T-cell (primary cell): ENCODE measurements at regions of chr11 and their contacts with region 1.

Region 1: DNA sequence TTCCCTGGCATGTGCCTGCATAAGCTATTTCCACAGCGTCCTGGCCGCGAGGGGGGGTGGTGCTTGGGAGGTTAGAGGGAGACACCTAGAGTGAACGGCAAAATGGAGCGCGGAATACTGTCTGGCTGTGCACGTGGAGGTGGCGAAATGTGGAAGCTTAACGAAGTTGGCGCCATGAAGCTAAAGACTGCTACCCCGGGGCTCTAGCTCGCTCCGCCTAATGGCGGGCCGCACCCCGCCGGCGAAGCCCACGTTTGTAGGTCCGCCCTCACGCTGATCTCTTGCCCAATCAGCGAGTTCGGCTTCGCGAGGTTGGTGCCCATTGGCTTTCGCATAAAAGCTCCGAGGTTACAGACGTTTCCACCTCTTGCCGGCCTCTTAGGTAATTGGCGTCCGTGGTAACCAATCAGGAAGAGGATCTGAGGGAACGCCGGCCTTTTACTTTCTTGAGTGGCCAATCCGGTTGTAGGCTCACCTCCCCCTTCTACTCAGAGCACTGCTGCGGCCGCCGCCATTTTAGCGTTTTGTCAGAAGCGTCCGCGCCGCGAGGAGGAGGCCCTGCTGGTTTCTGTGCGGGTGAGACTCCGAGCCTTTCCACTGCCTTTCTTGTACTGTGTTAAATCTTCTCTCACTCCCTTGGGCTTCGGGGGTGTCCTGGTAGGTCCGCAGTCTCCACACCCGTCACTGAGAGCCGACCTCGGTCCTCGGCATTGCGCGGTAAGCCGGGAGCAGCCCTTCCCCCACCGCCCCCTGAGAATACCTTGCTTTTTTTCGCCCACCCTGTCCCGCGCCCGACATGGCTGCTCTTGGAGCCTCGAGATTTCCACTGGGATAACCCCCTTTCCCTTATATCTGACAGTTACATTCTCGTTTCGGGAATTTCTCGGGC is at the start of gene RBM4:
- DNase-seq: peak; percentile 80 to 99 (median 97)
- ATAC-seq: peak; percentile 88 to 95 (median 92)
- H3K4me3 ChIP-seq: peak within 1 kb of the TSS; percentile 78 to 100
- H3K4me3 Mint-ChIP-seq: peak within 1 kb of the TSS; percentile 98 to 99 (median 99)
- H3K27ac ChIP-seq: peak within 1 kb of the TSS; percentile 79
- H3K27ac Mint-ChIP-seq: peak within 1 kb of the TSS; percentile 97
- H3K4me1 ChIP-seq: peaks cover 45 to 51% of the 10 kb centered on the region in 2 experiments
- H3K4me1 Mint-ChIP-seq: peaks cover 65 to 72% (median 67%) of the 10 kb centered on the region in 3 donors
- H3K27me3 ChIP-seq: no peaks in the 10 kb centered on the region
- H3K27me3 Mint-ChIP-seq: no peaks in the 10 kb centered on the region
- total RNA-seq, gene RBM4: 163 to 233 (median 181) TPM

Region 2: GRCh38 chr11:66106786-66107599 is 531.4 kb before region 1 on chr11:
- CTCF ChIA-PET with region 1: no interaction called
- POLR2A ChIA-PET with region 1: interaction called in 1 of 2 experiments, 10 read pairs
- DNase-seq: no peak
- ATAC-seq: no peak
- H3K4me3 ChIP-seq: no peak overlapping the region
- H3K4me3 Mint-ChIP-seq: peak overlapping the region in 1 of 3 donors; percentile 57
- H3K27ac ChIP-seq: no peak overlapping the region
- H3K27ac Mint-ChIP-seq: peak overlapping the region; percentile 53 to 90
- H3K4me1 ChIP-seq: peaks cover 41 to 73% of the 10 kb centered on the region in 2 experiments
- H3K4me1 Mint-ChIP-seq: peaks cover 82 to 88% (median 82%) of the 10 kb centered on the region in 3 donors
- H3K27me3 ChIP-seq: no peaks in the 10 kb centered on the region
- H3K27me3 Mint-ChIP-seq: no peaks in the 10 kb centered on the region

Region 3: GRCh38 chr11:66454249-66454648 is 184.2 kb before region 1 on chr11:
- CTCF ChIA-PET with region 1: no interaction called
- POLR2A ChIA-PET with region 1: no interaction called
- DNase-seq: no peak
- ATAC-seq: no peak
- H3K4me3 ChIP-seq: no peak overlapping the region
- H3K4me3 Mint-ChIP-seq: no peak overlapping the region
- H3K27ac ChIP-seq: no peak overlapping the region
- H3K27ac Mint-ChIP-seq: no peak overlapping the region
- H3K4me1 ChIP-seq: peaks cover 3 to 7% of the 10 kb centered on the region in 2 experiments
- H3K4me1 Mint-ChIP-seq: peaks cover 13 to 17% (median 15%) of the 10 kb centered on the region in 3 donors
- H3K27me3 ChIP-seq: peaks cover 0 to 16% of the 10 kb centered on the region in 2 experiments
- H3K27me3 Mint-ChIP-seq: peaks cover 7 to 8% of the 10 kb centered on the region in 2 donors

Region 4: GRCh38 chr11:66466225-66467027 is 172.0 kb before region 1 on chr11 and contains the start of gene PELI3:
- CTCF ChIA-PET with region 1: interaction called in 1 of 2 experiments, 4 read pairs
- POLR2A ChIA-PET with region 1: interaction called, 5 to 16 read pairs
- DNase-seq: peak; percentile 83 to 97 (median 92)
- ATAC-seq: peak; percentile 88 to 93 (median 90)
- H3K4me3 ChIP-seq: peak within 1 kb of the TSS; percentile 49 to 70
- H3K4me3 Mint-ChIP-seq: peak within 1 kb of the TSS; percentile 83 to 89 (median 88)
- H3K27ac ChIP-seq: peak within 1 kb of the TSS; percentile 94
- H3K27ac Mint-ChIP-seq: peak within 1 kb of the TSS; percentile 85 to 91
- H3K4me1 ChIP-seq: peaks cover 7 to 24% of the 10 kb centered on the region in 2 experiments
- H3K4me1 Mint-ChIP-seq: peaks cover 20 to 30% (median 25%) of the 10 kb centered on the region in 3 donors
- H3K27me3 ChIP-seq: no peaks in the 10 kb centered on the region
- H3K27me3 Mint-ChIP-seq: no peaks in the 10 kb centered on the region
- total RNA-seq, gene PELI3: 12.9 to 22.0 (median 13.8) TPM

Region 5: GRCh38 chr11:66616379-66617154 is 21.9 kb before region 1 on chr11 and contains the start of gene RBM14:
- CTCF ChIA-PET with region 1: interaction called in 1 of 2 experiments, 26 read pairs
- POLR2A ChIA-PET with region 1: interaction called, 21 to 165 read pairs
- DNase-seq: peak; percentile 95 to 99 (median 98)
- ATAC-seq: peak; percentile 85 to 94 (median 93)
- H3K4me3 ChIP-seq: peak within 1 kb of the TSS; percentile 93 to 97
- H3K4me3 Mint-ChIP-seq: peak within 1 kb of the TSS; percentile 97 to 99 (median 98)
- H3K27ac ChIP-seq: peak within 1 kb of the TSS; percentile 97
- H3K27ac Mint-ChIP-seq: peak within 1 kb of the TSS; percentile 98
- H3K4me1 ChIP-seq: peaks cover 29 to 49% of the 10 kb centered on the region in 2 experiments
- H3K4me1 Mint-ChIP-seq: peaks cover 44 to 50% (median 49%) of the 10 kb centered on the region in 3 donors
- H3K27me3 ChIP-seq: no peaks in the 10 kb centered on the region
- H3K27me3 Mint-ChIP-seq: no peaks in the 10 kb centered on the region
- total RNA-seq, gene RBM14: 176 to 382 (median 191) TPM

Region 6: DNA sequence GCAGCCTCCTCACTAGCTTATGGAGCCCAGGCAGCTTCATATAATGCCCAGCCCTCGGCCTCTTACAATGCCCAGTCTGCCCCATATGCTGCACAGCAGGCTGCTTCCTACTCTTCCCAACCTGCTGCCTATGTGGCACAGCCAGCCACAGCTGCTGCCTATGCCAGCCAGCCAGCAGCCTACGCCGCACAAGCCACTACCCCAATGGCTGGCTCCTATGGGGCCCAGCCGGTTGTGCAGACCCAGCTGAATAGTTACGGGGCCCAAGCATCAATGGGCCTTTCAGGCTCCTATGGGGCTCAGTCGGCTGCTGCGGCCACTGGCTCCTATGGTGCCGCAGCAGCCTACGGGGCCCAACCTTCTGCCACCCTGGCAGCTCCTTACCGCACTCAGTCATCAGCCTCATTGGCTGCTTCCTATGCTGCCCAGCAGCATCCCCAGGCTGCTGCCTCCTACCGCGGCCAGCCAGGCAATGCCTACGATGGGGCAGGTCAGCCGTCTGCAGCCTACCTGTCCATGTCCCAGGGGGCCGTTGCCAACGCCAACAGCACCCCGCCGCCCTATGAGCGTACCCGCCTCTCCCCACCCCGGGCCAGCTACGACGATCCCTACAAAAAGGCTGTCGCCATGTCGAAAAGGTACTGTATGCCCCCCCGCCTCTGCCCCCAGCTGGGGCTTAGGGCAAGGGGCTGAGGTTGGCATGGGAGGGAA is 13.2 kb before region 1 on chr11:
- CTCF ChIA-PET with region 1: interaction called in 1 of 2 experiments, 6 read pairs
- POLR2A ChIA-PET with region 1: interaction called, 20 to 165 read pairs
- DNase-seq: no peak
- ATAC-seq: peak in 1 of 4 experiments; percentile 4
- H3K4me3 ChIP-seq: no peak overlapping the region
- H3K4me3 Mint-ChIP-seq: no peak overlapping the region
- H3K27ac ChIP-seq: no peak overlapping the region
- H3K27ac Mint-ChIP-seq: no peak overlapping the region
- H3K4me1 ChIP-seq: peaks cover 24 to 69% of the 10 kb centered on the region in 2 experiments
- H3K4me1 Mint-ChIP-seq: peaks cover 76 to 98% (median 85%) of the 10 kb centered on the region in 3 donors
- H3K27me3 ChIP-seq: no peaks in the 10 kb centered on the region
- H3K27me3 Mint-ChIP-seq: no peaks in the 10 kb centered on the region

Region 7: DNA sequence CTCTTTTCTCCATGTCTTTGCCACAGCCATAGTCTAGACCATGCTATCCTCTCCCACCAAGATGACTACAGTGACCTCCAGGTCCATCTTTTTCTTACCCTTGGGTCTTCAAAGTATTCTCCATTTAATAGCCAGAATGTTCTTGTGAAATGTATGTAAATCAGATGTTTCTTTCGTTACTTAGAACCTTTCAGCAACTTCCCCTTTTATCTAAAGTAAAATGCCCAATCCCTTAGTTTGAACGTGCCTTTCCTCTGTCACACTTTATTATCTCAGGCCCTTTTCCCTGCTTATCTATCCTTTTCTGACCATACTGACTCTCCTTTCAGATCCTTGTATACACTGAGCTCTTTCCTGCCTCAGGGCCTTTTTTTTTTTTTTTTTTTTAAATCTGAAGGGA is 21.3 kb after region 1 on chr11:
- CTCF ChIA-PET with region 1: interaction called in 1 of 2 experiments, 7 read pairs
- POLR2A ChIA-PET with region 1: interaction called, 14 read pairs
- DNase-seq: no peak
- ATAC-seq: no peak
- H3K4me3 ChIP-seq: no peak overlapping the region
- H3K4me3 Mint-ChIP-seq: no peak overlapping the region
- H3K27ac ChIP-seq: no peak overlapping the region
- H3K27ac Mint-ChIP-seq: no peak overlapping the region
- H3K4me1 ChIP-seq: no peaks in the 10 kb centered on the region
- H3K4me1 Mint-ChIP-seq: peaks cover 18 to 30% (median 21%) of the 10 kb centered on the region in 3 donors
- H3K27me3 ChIP-seq: no peaks in the 10 kb centered on the region
- H3K27me3 Mint-ChIP-seq: no peaks in the 10 kb centered on the region

Region 8: DNA sequence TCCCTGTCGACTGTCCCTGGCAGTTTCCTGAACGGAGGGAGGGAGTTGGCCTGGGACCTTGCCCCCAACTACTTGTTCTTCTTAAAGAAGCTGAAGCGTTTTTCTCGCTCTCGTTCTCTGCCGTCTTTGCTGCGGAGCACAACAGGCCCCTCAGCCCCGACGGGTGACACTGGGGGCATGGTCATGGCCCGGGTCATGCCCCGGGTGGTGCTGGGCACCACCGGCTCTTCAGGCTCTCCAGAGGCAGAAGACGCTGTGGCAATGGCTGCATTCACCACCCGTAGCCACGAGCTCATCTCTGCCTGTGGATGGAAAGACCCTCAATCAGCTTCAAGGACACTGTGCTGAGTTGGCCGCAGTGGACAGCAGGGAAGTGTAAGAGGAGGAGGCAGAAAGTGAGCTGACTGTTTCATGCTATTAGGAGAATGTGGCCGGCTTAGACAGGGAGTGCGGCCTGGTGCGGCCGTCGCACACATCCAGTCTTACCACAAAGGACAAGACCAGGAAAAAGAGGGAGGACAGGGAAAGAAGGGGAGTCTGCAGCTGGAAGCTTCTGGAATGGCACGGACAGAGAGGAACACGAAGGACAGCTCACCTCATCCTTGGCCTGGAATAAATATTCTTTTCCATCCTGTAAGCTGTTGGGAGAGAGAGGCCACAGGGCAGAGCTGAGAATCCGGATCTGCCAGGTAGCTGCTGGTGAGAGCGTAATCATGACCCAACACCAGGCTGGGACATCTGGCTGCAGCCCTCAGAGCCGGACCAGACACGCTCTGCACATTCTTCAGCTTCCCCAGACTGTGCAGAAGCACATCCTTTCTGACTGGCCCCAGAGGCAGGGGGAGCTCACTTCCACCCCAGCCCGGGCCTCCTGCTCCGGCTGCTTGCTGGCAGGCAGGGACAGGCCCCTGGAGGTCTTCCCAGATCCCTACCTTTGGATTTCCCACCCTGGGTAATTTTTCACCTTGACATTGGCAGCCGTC is 47.7 kb after region 1 on chr11:
- CTCF ChIA-PET with region 1: no interaction called
- POLR2A ChIA-PET with region 1: no interaction called
- DNase-seq: no peak
- ATAC-seq: no peak
- H3K4me3 ChIP-seq: no peak overlapping the region
- H3K4me3 Mint-ChIP-seq: no peak overlapping the region
- H3K27ac ChIP-seq: no peak overlapping the region
- H3K27ac Mint-ChIP-seq: no peak overlapping the region
- H3K4me1 ChIP-seq: no peaks in the 10 kb centered on the region
- H3K4me1 Mint-ChIP-seq: no peaks in the 10 kb centered on the region
- H3K27me3 ChIP-seq: peaks cover 0 to 10% of the 10 kb centered on the region in 2 experiments
- H3K27me3 Mint-ChIP-seq: no peaks in the 10 kb centered on the region